Ascending aorta (tissue), 2 donors: ENCODE measurements at regions of chr6 and their contacts with region 1.

Region 1: DNA sequence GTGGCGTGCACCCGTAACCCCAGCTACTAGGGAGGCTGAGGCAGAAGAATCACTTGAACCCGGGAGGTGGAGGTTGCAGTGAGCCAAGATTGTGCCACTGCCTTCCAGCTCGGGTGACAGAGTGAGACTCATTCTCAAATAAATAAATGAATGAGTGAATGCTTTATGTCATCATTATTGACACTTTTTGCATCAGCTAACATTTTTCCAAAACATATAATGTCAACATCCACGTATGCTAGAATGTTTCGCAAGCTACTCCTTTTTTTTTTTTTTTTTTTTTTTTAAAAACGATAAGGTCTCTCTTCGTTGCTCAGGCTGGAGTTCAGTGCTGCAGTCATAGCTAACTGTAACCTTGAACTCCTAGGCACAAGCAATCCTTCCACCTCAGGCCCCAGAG is 72.2 kb downstream of the SENP6 start:
- DNase-seq: no peak
- H3K4me3 ChIP-seq: no peak overlapping the region
- H3K27ac ChIP-seq: no peak overlapping the region
- H3K4me1 ChIP-seq: no peaks in the 10 kb centered on the region
- H3K27me3 ChIP-seq: no peaks in the 10 kb centered on the region
- CTCF ChIP-seq: no peak

Region 2: GRCh38 chr6:75689576-75689975 is 15.7 kb after region 1 on chr6:
- intact Hi-C with region 1: loop called (anchors 1 kb)
- DNase-seq: no peak
- H3K4me3 ChIP-seq: no peak overlapping the region
- H3K27ac ChIP-seq: no peak overlapping the region
- H3K4me1 ChIP-seq: no peaks in the 10 kb centered on the region
- H3K27me3 ChIP-seq: no peaks in the 10 kb centered on the region
- CTCF ChIP-seq: no peak